ENCODE measurements at regions of chr17 and their contacts with region 1.

Region 1: GRCh38 chr17:81959362-81960129 is 1.4 kb downstream of the NOTUM start:
- DNase-seq: peak in 1 of 2 donors; percentile 56
- ATAC-seq: peak; percentile 70 to 74
- H3K4me3 ChIP-seq: peak overlapping the region; percentile 43 to 54 (median 48)
- H3K27ac ChIP-seq: peak overlapping the region in 3 of 4 donors; percentile 8 to 50 (median 48)
- H3K4me1 ChIP-seq: peaks cover 12 to 23% of the 10 kb centered on the region in 2 donors
- H3K27me3 ChIP-seq: peaks cover 7 to 21% (median 19%) of the 10 kb centered on the region in 3 donors
- CTCF ChIP-seq: peak in 4 of 5 experiments; percentile 95 to 99 (median 97)
- POLR2A ChIP-seq: no peak

Region 2: GRCh38 chr17:81977211-81978027 is 17.9 kb after region 1 on chr17 and contains the start of gene ASPSCR1:
- in situ Hi-C with region 1: no loop called
- intact Hi-C with region 1: loop called (anchors 2 kb)
- DNase-seq: peak; percentile 78 to 87
- ATAC-seq: peak; percentile 91 to 95
- H3K4me3 ChIP-seq: peak within 1 kb of the TSS; percentile 75 to 95 (median 88)
- H3K27ac ChIP-seq: peak within 1 kb of the TSS; percentile 90 to 96 (median 94)
- H3K4me1 ChIP-seq: peaks cover 11 to 18% of the 10 kb centered on the region in 2 donors
- H3K27me3 ChIP-seq: no peaks in the 10 kb centered on the region
- CTCF ChIP-seq: peak in 2 of 5 experiments; percentile 22 to 29
- POLR2A ChIP-seq: peak; percentile 78 to 89
- total RNA-seq, gene ASPSCR1: 24.0 to 44.7 (median 32.0) TPM

Region 3: GRCh38 chr17:81991684-81992305 is 32.2 kb after region 1 on chr17:
- in situ Hi-C with region 1: no loop called
- intact Hi-C with region 1: loop called (anchors 1 kb)
- DNase-seq: peak; percentile 82 to 93
- ATAC-seq: peak; percentile 93 to 94
- H3K4me3 ChIP-seq: peak overlapping the region; percentile 32 to 59 (median 34)
- H3K27ac ChIP-seq: peak overlapping the region; percentile 84 to 87 (median 86)
- H3K4me1 ChIP-seq: peaks cover 17 to 23% of the 10 kb centered on the region in 2 donors
- H3K27me3 ChIP-seq: no peaks in the 10 kb centered on the region
- CTCF ChIP-seq: peak in 1 of 5 experiments; percentile 20
- POLR2A ChIP-seq: peak; percentile 29 to 37

Region 4: DNA sequence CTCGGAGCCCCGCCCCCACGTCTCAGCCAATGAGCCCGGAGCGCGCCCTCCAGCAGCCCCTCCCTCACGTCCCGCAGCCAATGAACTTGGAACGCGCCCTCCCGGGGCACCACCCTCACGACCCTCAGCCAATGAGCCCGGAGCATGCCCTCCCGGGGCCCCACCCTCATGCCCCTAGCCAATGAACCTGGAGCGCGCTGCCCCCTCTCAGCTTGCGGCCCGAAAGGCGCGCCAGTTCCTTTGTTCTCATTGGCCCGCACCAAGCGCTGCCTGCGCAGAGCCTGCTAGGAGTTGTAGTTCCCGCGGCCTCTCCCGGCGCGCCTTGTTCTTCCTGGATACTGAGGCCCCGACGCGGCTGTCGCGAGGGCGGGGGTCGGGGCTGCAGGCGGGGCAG is 63.4 kb after region 1 on chr17 and contains the start of gene LRRC45:
- in situ Hi-C with region 1: loop called in 1 of 4 experiments (anchors 5 kb)
- intact Hi-C with region 1: loop called (anchors 1 kb)
- DNase-seq: peak; percentile 100
- ATAC-seq: peak; percentile 86 to 91
- H3K4me3 ChIP-seq: peak within 1 kb of the TSS; percentile 89 to 92 (median 92)
- H3K27ac ChIP-seq: peak within 1 kb of the TSS; percentile 78 to 86 (median 79)
- H3K4me1 ChIP-seq: peaks cover 25 to 55% of the 10 kb centered on the region in 2 donors
- H3K27me3 ChIP-seq: no peaks in the 10 kb centered on the region
- CTCF ChIP-seq: no peak
- POLR2A ChIP-seq: no peak
- total RNA-seq, gene LRRC45: 1.1 to 5.0 (median 3.8) TPM

Region 5: DNA sequence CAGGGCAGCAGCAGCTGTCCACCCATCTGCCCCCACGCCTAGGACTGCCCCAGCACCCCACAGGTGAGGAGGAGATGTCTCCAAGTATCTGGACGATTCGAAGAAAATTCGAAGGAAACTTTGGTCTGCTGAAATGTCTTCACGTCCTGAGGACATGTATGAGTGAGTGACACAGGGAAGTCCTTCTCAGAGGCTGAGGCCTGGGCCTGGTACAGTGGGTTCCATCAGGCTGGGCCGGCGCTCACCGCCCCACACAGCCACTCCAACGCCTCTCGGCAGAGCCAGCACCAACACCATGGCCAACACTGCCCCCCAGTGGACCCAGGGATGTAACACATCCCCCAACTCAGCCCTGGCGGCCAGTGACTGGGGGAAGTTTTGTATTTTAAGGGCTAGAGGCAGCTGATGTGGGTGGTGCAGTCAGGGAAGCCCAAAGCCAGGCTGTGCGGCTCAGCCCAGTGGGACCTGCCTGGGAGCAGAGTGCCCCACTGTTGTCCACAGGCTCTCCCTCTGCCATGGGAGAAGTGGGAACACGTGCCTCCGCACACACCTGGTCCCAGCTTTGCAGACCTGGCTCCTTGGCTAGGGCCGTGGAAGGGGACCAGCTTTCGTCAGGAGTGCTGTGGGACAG is 194.3 kb after region 1 on chr17:
- in situ Hi-C with region 1: no loop called
- intact Hi-C with region 1: loop called (anchors 2 kb)
- DNase-seq: peak; percentile 66 to 80
- ATAC-seq: peak; percentile 78
- H3K4me3 ChIP-seq: no peak overlapping the region
- H3K27ac ChIP-seq: peak overlapping the region in 2 of 4 donors; percentile 80 to 81
- H3K4me1 ChIP-seq: peaks cover 17 to 20% of the 10 kb centered on the region in 2 donors
- H3K27me3 ChIP-seq: no peaks in the 10 kb centered on the region
- CTCF ChIP-seq: peak; percentile 89 to 96 (median 93)
- POLR2A ChIP-seq: no peak

Measured in gastrocnemius medialis (tissue), 4 donors.